HepG2 (cell line): ENCODE measurements at regions of chr15 and their contacts with region 1.

Region 1: GRCh38 chr15:38671675-38672254 is 107.2 kb upstream of the RASGRP1 start:
- DNase-seq: no peak
- ATAC-seq: no peak
- H3K4me3 ChIP-seq: no peak overlapping the region
- H3K27ac ChIP-seq: no peak overlapping the region
- H3K4me1 ChIP-seq: no peaks in the 10 kb centered on the region
- H3K27me3 ChIP-seq: peaks cover 0 to under 1% of the 10 kb centered on the region in 2 experiments; a peak in 1 of 5 replicates
- CTCF ChIP-seq: no peak
- EP300 ChIP-seq: no peak
- POLR2A ChIP-seq: no peak
- RAD21 ChIP-seq: no peak

Region 2: DNA sequence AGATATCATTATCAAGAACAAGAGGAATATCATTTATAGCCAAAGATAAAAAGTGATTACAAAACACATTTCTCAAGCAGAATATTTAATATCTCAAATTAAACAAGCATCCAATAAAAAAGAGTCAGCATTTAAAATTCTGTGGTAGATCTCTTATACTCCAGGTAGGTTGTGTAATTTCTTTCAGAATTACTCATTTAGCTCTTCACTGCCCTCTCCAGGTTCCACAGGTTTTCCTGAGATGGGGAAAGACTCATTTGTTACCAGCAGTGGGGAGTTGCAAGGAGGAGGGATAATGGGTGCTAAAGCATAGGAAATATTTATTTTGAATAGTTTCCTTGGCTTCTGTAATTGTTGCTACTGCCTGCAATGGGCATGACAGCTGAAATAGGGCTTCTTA is 24.1 kb before region 1 on chr15:
- CTCF ChIA-PET with region 1: no interaction called
- POLR2A ChIA-PET with region 1: no interaction called
- in situ Hi-C with region 1: no loop called
- intact Hi-C with region 1: loop called (anchors 1 kb)
- DNase-seq: peak; percentile 13
- ATAC-seq: peak; percentile 44; the same call in 1 of the 3 replicates
- H3K4me3 ChIP-seq: no peak overlapping the region
- H3K27ac ChIP-seq: no peak overlapping the region
- H3K4me1 ChIP-seq: no peaks in the 10 kb centered on the region
- H3K27me3 ChIP-seq: no peaks in the 10 kb centered on the region; a peak in 1 of 5 replicates
- CTCF ChIP-seq: no peak; the same call in 1 of the 2 replicates
- EP300 ChIP-seq: no peak
- POLR2A ChIP-seq: no peak
- RAD21 ChIP-seq: no peak